ENCODE measurements at regions of chr1 and their contacts with region 1.

Region 1: DNA sequence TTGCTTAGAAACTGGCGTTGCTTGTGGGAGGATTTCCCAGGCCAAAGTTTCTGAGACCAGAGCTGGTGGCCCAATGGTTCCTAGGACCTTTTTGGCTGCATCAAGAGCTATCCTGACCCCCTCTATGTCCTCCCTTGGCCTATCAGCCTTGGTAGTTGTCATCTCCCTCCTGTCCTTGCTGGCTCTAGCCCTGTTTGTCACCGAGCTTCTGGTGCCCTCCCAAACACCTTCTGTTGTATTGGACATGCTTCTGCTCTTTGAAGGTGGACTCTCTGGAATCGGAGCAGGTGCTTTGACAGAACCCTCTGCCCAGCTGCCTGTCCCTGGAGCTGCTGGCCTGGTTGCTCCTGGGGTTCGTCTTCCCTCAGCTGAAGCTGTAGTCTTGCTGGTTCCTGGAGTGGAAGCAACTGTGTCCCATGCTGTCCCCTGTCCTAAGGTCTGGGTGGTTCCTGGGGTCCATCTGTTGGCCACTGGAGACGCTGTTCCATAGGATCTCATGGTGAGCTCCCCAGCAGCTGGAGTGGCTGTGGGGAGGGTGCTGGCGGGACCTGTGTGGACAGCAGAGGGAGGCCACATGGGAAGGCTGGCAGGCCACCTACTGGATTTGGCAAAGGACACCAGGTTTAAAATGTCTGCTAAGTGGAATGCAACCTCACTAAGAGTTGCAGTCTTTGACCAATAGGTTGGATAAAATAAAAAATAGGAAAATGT is 9.4 kb downstream of the FCAMR start:
- DNase-seq: no peak
- H3K4me3 Mint-ChIP-seq: no peak overlapping the region
- H3K27ac Mint-ChIP-seq: no peak overlapping the region
- H3K4me1 Mint-ChIP-seq: peaks cover 28% of the 10 kb centered on the region
- H3K27me3 Mint-ChIP-seq: peaks cover 2% of the 10 kb centered on the region

Region 2: DNA sequence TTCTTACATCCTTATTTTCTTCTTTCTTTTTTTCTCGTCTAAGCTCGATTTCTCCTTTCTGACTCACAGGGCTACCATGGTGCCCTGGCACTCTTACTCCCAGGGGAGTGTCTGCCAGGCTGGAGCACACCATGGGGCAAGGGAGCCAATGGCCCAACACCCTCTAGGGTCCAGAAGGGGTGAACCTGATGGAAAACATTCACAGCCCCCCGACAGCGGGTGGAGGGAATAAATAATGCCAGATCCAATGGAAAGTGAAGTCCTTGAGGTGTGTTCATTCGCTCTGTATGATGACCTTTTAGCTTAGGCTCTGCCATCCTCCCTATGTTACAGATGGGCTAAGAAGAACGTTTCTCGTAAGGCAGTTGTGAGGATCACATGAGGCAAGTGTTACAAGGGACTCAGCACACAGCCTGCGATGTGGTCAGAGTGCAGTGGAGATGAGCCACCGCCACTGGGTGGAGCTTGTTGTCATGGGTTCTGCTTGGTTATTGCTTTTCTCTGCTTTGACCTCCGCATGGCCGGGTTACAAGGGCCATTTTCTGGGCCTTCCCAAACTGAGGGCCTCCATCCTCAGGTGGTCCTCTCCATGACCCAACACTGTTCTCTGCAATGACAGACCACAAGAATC is 35.6 kb before region 1 on chr1:
- intact Hi-C with region 1: loop called (anchors 2 kb)
- DNase-seq: peak; percentile 85
- H3K4me3 Mint-ChIP-seq: no peak overlapping the region
- H3K27ac Mint-ChIP-seq: no peak overlapping the region
- H3K4me1 Mint-ChIP-seq: peaks cover 24% of the 10 kb centered on the region
- H3K27me3 Mint-ChIP-seq: no peaks in the 10 kb centered on the region

Region 3: DNA sequence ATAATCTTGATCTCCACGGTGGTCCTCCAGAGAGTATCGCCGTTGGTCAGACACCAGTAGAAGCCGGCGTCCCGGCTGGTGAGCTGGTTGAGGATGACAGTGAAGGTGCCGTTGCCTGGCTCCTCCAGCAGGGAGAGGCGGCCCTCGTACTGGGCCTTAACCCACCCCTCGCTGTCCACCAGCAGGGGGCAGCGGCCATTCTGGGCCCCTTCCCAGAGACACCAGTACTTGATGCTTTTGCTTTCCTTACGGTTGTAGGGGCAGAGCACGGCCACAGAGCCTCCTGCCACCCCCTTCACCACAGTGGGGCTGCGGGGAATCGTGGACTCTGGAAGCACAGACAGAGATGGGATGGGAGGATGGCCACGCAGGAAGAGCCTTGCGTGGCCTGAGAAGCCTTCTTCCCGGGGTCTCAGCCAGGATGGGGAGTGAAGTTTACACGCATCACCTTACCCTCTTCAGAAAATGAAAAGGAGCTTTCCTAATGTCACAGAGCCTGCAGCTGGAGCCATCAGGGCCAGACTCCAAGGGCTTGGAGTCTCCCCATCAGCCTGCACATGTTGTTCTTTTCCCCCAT is 25.3 kb before region 1 on chr1:
- intact Hi-C with region 1: no loop called
- DNase-seq: peak; percentile 85
- H3K4me3 Mint-ChIP-seq: no peak overlapping the region
- H3K27ac Mint-ChIP-seq: no peak overlapping the region
- H3K4me1 Mint-ChIP-seq: peaks cover 2% of the 10 kb centered on the region
- H3K27me3 Mint-ChIP-seq: peaks cover 1% of the 10 kb centered on the region

Region 4: GRCh38 chr1:207017615-207018559 is 57.1 kb after region 1 on chr1:
- intact Hi-C with region 1: no loop called
- DNase-seq: no peak
- H3K4me3 Mint-ChIP-seq: no peak overlapping the region
- H3K27ac Mint-ChIP-seq: no peak overlapping the region
- H3K4me1 Mint-ChIP-seq: no peaks in the 10 kb centered on the region
- H3K27me3 Mint-ChIP-seq: peaks cover 23% of the 10 kb centered on the region

Measured in activated CD4-positive, alpha-beta T cell treated with anti-CD3 and anti-CD28 coated beads, Interleukin-2, amount 10 ng/mL, durations not matched to agents 24 days and 14 days (primary cell).